Cardiac septum (tissue), 1 donor: ENCODE measurements at regions of chr14 and their contacts with region 1.

Region 1: DNA sequence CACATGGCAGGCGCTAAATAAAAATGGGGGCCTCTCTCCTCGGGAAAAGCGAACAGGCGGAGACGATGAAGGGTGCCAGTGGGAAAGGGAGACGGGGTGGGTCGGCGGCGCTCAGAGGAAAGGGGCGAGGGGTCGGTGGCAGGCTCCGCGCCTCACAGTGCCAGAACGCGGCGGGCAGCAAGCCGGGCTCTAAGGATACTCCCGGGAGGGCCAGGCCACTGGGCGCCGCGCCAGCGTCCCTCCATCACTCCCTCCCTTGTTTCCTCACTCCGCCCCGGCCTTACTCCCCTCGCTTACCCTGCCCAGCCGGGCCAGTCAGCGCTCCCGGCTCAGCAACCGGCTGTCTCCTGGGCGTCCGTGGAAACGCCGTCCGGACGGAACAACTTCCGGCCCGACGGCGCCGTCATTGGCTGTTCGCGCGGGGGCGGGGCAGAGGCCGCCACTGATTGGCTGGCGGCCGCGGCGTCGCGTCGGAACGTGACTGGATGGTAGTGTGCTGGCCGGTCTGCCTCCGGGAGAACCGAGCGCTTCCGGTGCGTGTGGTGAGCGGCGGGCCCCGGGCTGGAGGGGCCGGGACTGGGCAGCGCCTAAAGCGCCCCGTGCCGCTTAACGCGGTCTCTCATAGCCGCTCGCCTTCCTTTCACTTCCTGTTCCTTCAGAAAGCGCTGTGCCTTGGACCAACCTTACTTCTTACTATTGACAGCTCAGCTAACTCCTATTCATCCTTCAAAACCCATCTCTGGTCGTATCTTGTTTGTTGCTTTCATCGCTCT is 53.0 kb downstream of the SLC25A47 start:
- DNase-seq: peak; percentile 98

Region 2: GRCh38 chr14:99982537-99983250 is 393.5 kb before region 1 on chr14:
- intact Hi-C with region 1: loop called (anchors 5 kb)
- DNase-seq: no peak

Region 3: DNA sequence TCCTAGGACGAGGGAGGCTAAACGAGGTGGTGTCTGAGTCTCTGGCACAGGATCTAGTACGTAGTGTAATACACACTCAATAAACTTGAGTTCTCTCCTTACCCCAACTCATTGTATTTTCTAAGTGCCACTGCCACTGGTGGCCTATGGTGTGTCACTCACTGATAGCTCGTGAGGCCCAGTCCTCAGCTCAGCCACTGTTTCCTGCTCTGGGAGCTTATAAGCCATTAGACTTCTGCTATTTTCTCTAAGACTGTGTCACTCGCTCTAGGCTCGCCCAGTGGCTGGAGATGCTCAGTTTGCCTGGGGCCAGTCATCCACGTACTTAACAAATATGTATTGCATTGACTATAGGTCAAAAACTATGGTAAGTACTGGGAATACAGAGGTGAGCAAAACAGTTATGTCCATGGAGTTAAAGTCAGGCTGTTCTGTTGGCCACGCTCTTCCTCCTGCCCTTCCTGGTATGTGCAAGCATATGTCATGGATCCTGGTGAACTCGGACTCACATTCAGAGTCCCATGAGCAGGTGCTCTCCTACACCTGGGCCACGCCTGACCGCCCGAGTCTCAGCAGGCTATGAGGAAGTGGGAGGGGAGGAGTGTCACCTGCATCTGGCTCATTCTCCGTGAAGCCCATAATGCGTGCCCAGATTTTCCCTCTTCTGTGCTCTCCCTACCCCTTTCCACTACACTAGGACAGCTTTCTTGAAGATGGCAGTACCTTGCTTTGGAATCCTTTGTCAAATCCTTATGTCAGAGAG is 258.3 kb before region 1 on chr14:
- intact Hi-C with region 1: no loop called
- DNase-seq: no peak

Region 4: GRCh38 chr14:100239840-100240724 is 136.1 kb before region 1 on chr14:
- intact Hi-C with region 1: loop called (anchors 2 kb)
- DNase-seq: peak; percentile 93

Region 5: GRCh38 chr14:100285021-100285912 is 90.9 kb before region 1 on chr14:
- intact Hi-C with region 1: loop called (anchors 5 kb)
- DNase-seq: peak; percentile 88

Region 6: DNA sequence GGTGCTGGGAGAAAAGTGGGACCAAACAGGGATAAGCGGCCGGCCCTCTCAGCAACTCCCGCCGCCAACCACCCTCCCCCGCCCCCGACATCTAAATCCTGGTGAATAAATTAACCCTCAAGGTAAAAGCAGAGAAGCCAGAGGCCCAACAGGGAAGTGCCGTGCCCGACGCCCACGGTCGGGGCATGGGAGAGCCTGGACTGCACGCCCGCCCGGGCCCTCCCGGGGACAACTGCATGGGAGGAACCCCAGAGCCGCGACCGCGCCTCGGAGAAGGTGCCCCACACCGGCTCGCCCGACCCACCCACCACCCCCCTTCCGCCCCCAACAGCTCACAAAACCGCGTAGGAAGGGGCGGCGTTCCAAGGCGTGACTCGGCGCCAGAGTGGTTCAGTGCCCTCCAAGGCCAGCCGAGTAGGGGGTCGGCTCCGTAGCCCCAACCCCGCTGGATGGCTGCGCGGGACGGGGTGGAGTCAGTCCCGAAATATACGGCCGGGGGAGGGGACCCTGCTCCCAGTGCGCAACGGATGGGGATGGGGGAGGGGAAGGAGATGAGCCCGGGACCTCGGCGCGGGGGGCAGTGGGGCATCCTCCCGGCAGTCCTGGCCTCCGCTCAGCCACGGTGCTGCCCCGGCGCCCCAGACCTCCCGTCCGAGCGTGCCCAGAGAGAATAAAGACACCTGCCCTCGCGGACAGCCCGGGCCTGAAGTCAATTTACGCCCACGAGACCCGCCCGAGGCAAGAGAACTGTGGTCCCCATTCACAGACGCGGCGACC is 70.6 kb before region 1 on chr14:
- intact Hi-C with region 1: loop called (anchors 2 kb)
- DNase-seq: no peak

Region 7: DNA sequence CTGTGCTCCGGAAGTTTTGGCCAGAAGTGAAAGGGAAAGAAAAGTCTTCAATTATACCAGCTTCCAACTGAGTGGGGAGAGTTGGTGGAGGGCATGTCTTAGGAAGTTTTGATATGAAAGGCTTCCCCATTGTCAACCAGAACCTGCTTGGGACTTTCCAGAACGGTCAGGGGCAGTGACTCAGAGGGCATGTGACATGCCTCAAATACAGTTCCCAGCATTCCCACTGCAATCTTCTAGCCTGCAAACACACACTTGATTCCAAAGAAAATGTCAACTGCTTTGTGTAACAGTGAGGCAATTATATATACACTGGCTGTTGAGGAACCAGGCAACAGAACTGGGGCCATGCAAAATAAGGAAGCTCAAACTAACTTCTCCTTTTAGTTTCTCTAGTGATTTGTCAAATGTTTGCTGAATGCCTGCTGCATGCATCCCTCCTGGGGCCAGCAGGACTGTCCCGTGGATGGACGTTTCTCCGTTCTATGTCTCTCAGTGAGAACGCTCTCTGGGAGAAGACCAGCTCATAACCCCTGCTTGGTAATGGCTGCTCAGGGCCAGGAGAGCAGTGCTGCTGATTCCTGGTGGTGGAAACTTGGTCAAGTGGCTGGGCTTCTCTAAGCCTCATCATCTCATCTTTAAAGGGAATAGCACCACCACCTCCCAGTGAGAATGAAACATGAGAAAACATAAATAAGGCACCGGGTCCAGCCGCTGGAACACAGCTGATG is 34.7 kb before region 1 on chr14:
- intact Hi-C with region 1: loop called (anchors 2 kb)
- DNase-seq: no peak

Region 8: DNA sequence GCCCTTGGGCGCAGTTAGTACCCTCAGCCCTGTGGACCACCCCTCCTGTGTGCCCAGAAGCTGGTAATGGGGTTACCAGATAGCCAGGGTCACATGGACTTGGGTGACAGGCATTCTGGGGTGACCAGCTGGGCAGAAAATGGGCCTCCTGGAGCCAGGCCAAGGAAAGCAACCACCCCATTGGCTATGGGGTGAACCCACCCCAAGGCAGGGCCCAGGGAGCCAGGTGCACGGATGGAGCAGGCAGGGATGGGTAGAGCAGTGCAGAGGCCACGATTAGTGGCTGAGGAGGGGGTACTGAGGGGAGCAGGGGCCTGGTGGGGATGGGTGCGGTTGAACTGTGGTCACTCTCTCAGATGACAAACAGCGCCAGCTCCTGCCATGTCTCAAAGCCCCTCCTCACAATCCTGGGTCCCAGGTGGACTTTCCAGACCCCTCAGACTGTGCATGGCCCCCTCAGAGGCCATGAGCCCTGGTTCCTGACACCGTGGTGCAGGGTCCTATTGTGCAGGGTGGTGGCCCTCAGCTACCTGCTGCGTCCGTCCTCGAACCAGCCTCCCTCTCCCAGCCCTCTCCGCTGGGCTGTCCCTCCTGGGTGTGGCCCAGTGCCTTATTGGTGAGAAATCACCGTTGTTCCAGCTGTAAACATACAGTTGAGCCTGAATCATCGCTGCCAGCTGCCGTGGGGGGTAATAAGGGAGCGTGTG is 234.5 kb after region 1 on chr14:
- intact Hi-C with region 1: no loop called
- DNase-seq: no peak